Caki2 (cell line): ENCODE measurements at regions of chr6 and their contacts with region 1.

Region 1: GRCh38 chr6:43990627-43991619 is 136.3 kb downstream of the MRPL14 start:
- DNase-seq: peak; percentile 82

Region 2: GRCh38 chr6:43891072-43891870 is 99.7 kb before region 1 on chr6:
- in situ Hi-C with region 1: loop called (anchors 10 kb)
- DNase-seq: no peak